MCF 10A (cell line): ENCODE measurements at regions of chr9 and their contacts with region 1.

Region 1: GRCh38 chr9:304519-305190 is 90.0 kb downstream of the DOCK8 start:
- DNase-seq: peak; percentile 57
- H3K4me3 Mint-ChIP-seq: peak overlapping the region; percentile 60
- H3K27ac Mint-ChIP-seq: peak overlapping the region; percentile 93
- H3K4me1 Mint-ChIP-seq: peaks cover 6% of the 10 kb centered on the region
- H3K27me3 Mint-ChIP-seq: no peaks in the 10 kb centered on the region
- CTCF ChIP-seq: no peak

Region 2: GRCh38 chr9:214648-215493 is 89.8 kb before region 1 on chr9 and contains the start of gene DOCK8:
- CTCF ChIA-PET with region 1: interaction called, 4 read pairs
- POLR2A ChIA-PET with region 1: interaction called, 7 read pairs
- intact Hi-C with region 1: loop called (anchors 5 kb)
- DNase-seq: peak; percentile 74
- H3K4me3 Mint-ChIP-seq: peak within 1 kb of the TSS; percentile 75
- H3K27ac Mint-ChIP-seq: no peak within 1 kb of the TSS
- H3K4me1 Mint-ChIP-seq: no peaks in the 10 kb centered on the region
- H3K27me3 Mint-ChIP-seq: no peaks in the 10 kb centered on the region
- CTCF ChIP-seq: peak; percentile 48
- total RNA-seq, gene DOCK8: 5.2 and 5.7 TPM in 2 replicates

Region 3: DNA sequence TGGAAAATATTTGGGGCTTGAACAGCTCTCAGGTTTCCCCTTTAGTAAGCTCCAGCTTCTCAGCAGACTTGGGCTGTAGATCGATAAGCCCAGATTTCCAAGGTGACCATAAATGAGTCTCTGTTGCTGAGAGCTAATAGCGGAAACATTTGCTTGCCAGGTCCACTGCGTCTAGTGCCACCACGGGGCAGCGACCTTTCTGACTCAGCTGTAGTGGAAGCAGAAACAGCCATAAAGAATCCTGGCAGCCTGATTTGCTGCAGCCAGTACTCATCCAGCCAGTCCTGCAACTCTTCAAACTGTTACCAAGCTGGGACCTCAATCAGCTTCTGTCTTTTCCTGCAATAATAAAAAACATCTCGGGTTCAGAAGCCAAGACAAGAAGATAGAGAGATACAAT is 151.7 kb after region 1 on chr9:
- CTCF ChIA-PET with region 1: no interaction called
- POLR2A ChIA-PET with region 1: no interaction called
- intact Hi-C with region 1: no loop called
- DNase-seq: no peak
- H3K4me3 Mint-ChIP-seq: no peak overlapping the region
- H3K27ac Mint-ChIP-seq: no peak overlapping the region
- H3K4me1 Mint-ChIP-seq: peaks cover 6% of the 10 kb centered on the region
- H3K27me3 Mint-ChIP-seq: no peaks in the 10 kb centered on the region
- CTCF ChIP-seq: no peak

Region 4: DNA sequence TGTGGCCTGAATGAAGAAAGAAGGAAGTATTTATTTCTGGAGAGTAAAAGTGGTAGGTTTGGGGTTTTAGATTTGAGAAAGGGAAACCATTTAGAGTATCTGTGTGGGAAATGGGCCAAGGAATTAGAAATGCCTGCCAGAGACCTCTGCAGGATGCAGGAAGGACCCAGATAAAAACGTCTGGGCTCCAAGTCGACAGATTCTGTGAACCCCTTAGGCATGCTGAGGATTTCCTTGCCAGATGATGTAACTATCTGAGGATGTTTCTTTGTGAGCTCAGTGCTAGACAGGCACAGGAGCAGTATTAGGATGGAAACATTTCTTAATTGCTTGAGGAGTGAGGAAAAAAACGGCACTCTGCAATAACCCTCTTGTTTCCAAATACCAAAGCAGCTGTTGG is 285.1 kb after region 1 on chr9:
- CTCF ChIA-PET with region 1: no interaction called
- POLR2A ChIA-PET with region 1: no interaction called
- intact Hi-C with region 1: no loop called
- DNase-seq: peak; percentile 77
- H3K4me3 Mint-ChIP-seq: peak overlapping the region; percentile 28
- H3K27ac Mint-ChIP-seq: peak overlapping the region; percentile 87
- H3K4me1 Mint-ChIP-seq: peaks cover 49% of the 10 kb centered on the region
- H3K27me3 Mint-ChIP-seq: no peaks in the 10 kb centered on the region
- CTCF ChIP-seq: no peak